Heart right ventricle (tissue), 16 donors: ENCODE measurements at regions of chr6 and their contacts with region 1.

Region 1: GRCh38 chr6:136226027-136226673 is 24.0 kb downstream of the MTFR2 start:
- DNase-seq: peak in 1 of 2 donors; percentile 50
- ATAC-seq: peak; percentile 63 to 95 (median 86)
- H3K4me3 ChIP-seq: peak overlapping the region in 7 of 10 donors; percentile 16 to 40 (median 34)
- H3K27ac ChIP-seq: peak overlapping the region in 5 of 10 donors; percentile 5 to 36 (median 23)
- H3K4me1 ChIP-seq: peaks cover 0 to 18% (median 5%) of the 10 kb centered on the region in 9 donors
- H3K27me3 ChIP-seq: no peaks in the 10 kb centered on the region
- CTCF ChIP-seq: peak; percentile 99 to 100 (median 100)

Region 2: GRCh38 chr6:135506270-135506997 is 719.7 kb before region 1 on chr6:
- intact Hi-C with region 1: loop called in 2 of 10 experiments (anchors 10 kb)
- DNase-seq: no peak
- ATAC-seq: peak in 2 of 8 donors; percentile 59 to 66
- H3K4me3 ChIP-seq: no peak overlapping the region
- H3K27ac ChIP-seq: no peak overlapping the region
- H3K4me1 ChIP-seq: peaks cover 0 to 4% (median 0%) of the 10 kb centered on the region in 9 donors
- H3K27me3 ChIP-seq: no peaks in the 10 kb centered on the region
- CTCF ChIP-seq: peak; percentile 26 to 75 (median 63)

Region 3: GRCh38 chr6:135675862-135676261 is 550.3 kb before region 1 on chr6:
- intact Hi-C with region 1: loop called in 3 of 10 experiments (anchors 10 kb)
- DNase-seq: no peak
- ATAC-seq: no peak
- H3K4me3 ChIP-seq: no peak overlapping the region
- H3K27ac ChIP-seq: no peak overlapping the region
- H3K4me1 ChIP-seq: no peaks in the 10 kb centered on the region
- H3K27me3 ChIP-seq: no peaks in the 10 kb centered on the region
- CTCF ChIP-seq: peak in 3 of 9 donors; percentile 29 to 44 (median 37)

Region 4: GRCh38 chr6:135909737-135910387 is 316.3 kb before region 1 on chr6:
- intact Hi-C with region 1: loop called in 1 of 10 experiments (anchors 10 kb)
- DNase-seq: peak in 1 of 2 donors; percentile 38
- ATAC-seq: peak in 2 of 8 donors; percentile 35 to 45
- H3K4me3 ChIP-seq: no peak overlapping the region
- H3K27ac ChIP-seq: no peak overlapping the region
- H3K4me1 ChIP-seq: peaks cover 0 to 6% (median 0%) of the 10 kb centered on the region in 9 donors
- H3K27me3 ChIP-seq: no peaks in the 10 kb centered on the region
- CTCF ChIP-seq: peak in 7 of 9 donors; percentile 34 to 67 (median 52)

Region 5: DNA sequence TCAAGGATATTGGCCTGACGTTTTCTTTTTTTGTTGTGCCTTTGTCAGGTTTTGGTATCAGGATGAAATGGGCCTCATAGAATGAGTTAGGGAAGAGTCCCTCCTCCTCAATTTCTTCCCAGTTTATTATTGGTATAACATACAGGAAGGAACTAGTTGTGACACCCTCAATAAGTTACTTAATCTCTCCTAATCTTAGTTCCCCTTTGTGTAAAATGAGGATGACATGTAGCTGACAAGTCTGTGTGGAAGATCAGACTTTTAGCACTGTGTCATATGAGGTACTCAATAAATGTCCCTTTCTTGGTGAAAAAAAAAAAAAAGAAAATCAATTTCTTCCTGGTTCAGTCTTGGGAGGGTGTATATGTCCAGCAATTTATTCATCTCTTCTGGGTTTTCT is 218.8 kb before region 1 on chr6:
- intact Hi-C with region 1: no loop called
- DNase-seq: no peak
- ATAC-seq: peak in 1 of 8 donors; percentile 34
- H3K4me3 ChIP-seq: no peak overlapping the region
- H3K27ac ChIP-seq: no peak overlapping the region
- H3K4me1 ChIP-seq: peaks cover 0 to 20% (median 8%) of the 10 kb centered on the region in 9 donors
- H3K27me3 ChIP-seq: no peaks in the 10 kb centered on the region
- CTCF ChIP-seq: no peak

Region 6: DNA sequence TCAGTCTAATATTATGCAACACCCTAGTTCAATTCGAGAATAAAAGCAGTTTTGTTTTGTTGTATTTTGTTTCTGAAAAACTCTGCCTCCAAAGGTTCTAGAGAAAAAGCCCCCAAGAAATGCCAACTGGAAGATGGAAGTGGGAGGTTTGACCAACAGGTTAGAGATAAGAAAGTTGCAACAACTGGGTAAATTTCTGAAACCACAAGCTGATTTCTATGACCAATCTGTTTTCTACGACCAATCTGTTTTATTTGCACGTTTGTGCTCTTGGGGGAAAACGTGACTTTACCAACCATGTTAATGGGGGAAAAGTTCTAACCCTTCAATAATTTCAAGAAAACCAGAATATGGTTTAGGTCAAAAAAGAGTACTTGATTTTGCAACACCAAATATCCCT is 201.4 kb before region 1 on chr6:
- intact Hi-C with region 1: loop called in 1 of 10 experiments (anchors 10 kb)
- DNase-seq: no peak
- ATAC-seq: no peak
- H3K4me3 ChIP-seq: no peak overlapping the region
- H3K27ac ChIP-seq: no peak overlapping the region
- H3K4me1 ChIP-seq: no peaks in the 10 kb centered on the region
- H3K27me3 ChIP-seq: no peaks in the 10 kb centered on the region
- CTCF ChIP-seq: no peak

Region 7: GRCh38 chr6:136037876-136038460 is 188.2 kb before region 1 on chr6:
- intact Hi-C with region 1: loop called in 7 of 10 experiments (anchors 5 to 10 kb)
- DNase-seq: peak; percentile 25 to 47
- ATAC-seq: peak; percentile 39 to 79 (median 64)
- H3K4me3 ChIP-seq: peak overlapping the region; percentile 23 to 67 (median 55)
- H3K27ac ChIP-seq: peak overlapping the region; percentile 9 to 92 (median 86)
- H3K4me1 ChIP-seq: peaks cover 4 to 93% (median 70%) of the 10 kb centered on the region in 9 donors
- H3K27me3 ChIP-seq: no peaks in the 10 kb centered on the region
- CTCF ChIP-seq: peak in 7 of 9 donors; percentile 28 to 56 (median 36)